ENCODE measurements at regions of chr21 and their contacts with region 1.

Region 1: DNA sequence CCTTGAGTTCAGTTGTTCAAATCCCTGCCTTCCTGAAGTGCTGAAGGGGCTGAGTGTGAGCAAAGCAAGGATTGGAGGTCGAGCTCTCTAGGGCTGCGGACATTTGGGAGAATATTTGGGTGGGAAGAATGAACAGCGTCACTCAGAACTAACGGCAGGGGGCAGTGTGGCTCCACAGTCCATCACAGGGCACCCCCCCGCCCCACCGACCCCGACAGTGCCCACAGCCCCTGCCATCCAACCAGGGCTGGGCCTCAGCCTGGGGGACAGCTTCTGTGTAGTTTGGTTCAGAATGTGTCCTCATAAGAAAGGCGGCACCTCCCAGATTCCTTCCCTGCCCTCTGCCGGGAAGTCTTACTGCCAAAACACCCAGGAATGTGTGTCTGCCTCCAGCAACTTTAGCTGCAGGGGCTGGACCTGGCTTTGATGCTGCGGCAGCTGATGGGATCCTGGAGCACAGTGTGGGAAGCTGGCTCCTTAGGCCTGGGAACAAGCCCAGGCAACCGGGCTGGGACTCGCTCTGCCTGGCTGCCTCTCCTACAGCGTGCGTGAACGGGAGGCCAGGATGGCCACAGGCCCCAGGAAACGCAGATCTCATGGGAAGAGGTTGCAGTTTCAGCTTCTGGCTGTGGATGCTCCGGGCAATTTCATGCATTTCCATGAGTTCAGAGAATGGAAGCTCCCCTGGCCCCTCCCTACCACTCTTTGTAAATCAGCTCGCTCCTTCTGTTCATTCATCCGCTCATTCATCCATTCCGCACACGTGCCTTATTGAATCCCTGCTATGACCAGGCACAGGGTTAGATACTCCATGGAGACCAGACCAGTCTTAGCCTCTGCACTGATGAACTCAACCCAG is 104.9 kb upstream of the TMPRSS2 start:
- DNase-seq: peak; percentile 79
- ATAC-seq: peak; percentile 82
- H3K4me3 Mint-ChIP-seq: peak overlapping the region; percentile 30
- H3K27ac Mint-ChIP-seq: peak overlapping the region; percentile 60
- H3K4me1 Mint-ChIP-seq: peaks cover 17% of the 10 kb centered on the region
- H3K27me3 Mint-ChIP-seq: peaks cover 6% of the 10 kb centered on the region
- CTCF ChIP-seq: peak; percentile 81

Region 2: GRCh38 chr21:41418393-41418792 is 194.5 kb before region 1 on chr21:
- CTCF ChIA-PET with region 1: no interaction called
- POLR2A ChIA-PET with region 1: no interaction called
- DNase-seq: no peak
- ATAC-seq: no peak
- H3K4me3 Mint-ChIP-seq: no peak overlapping the region
- H3K27ac Mint-ChIP-seq: no peak overlapping the region
- H3K4me1 Mint-ChIP-seq: peaks cover 26% of the 10 kb centered on the region
- H3K27me3 Mint-ChIP-seq: peaks cover 19% of the 10 kb centered on the region
- CTCF ChIP-seq: no peak

Region 3: DNA sequence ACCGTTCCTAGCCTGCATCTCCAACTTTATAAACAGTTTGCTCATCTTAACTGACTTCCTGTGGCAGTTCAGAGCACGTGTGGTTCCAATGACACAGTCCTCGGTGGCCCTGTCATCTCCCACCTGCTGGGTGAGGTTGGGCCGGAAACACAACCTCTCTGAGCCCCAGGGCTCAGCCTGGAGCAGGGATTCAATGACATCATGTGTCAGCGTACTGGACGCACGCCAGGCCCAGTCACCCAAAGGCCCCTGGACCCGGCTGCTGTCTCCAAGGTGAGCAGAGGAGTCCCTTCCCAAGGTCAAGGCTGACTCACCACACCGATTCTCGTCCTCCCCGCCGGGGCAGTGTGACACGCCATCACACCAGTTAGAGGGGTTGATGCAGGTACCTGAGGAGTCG is 124.8 kb before region 1 on chr21:
- CTCF ChIA-PET with region 1: no interaction called
- POLR2A ChIA-PET with region 1: no interaction called
- DNase-seq: no peak
- ATAC-seq: no peak
- H3K4me3 Mint-ChIP-seq: no peak overlapping the region
- H3K27ac Mint-ChIP-seq: no peak overlapping the region
- H3K4me1 Mint-ChIP-seq: peaks cover 9% of the 10 kb centered on the region; the same call in 1 of the 2 replicates
- H3K27me3 Mint-ChIP-seq: no peaks in the 10 kb centered on the region
- CTCF ChIP-seq: no peak

Region 4: GRCh38 chr21:41589131-41589530 is 23.8 kb before region 1 on chr21:
- CTCF ChIA-PET with region 1: interaction called, 15 read pairs
- POLR2A ChIA-PET with region 1: no interaction called
- DNase-seq: no peak
- ATAC-seq: peak; percentile 78
- H3K4me3 Mint-ChIP-seq: no peak overlapping the region
- H3K27ac Mint-ChIP-seq: no peak overlapping the region
- H3K4me1 Mint-ChIP-seq: peaks cover 14% of the 10 kb centered on the region
- H3K27me3 Mint-ChIP-seq: peaks cover 15% of the 10 kb centered on the region
- CTCF ChIP-seq: no peak

Region 5: GRCh38 chr21:41648591-41649031 is 35.7 kb after region 1 on chr21:
- CTCF ChIA-PET with region 1: interaction called, 21 read pairs
- POLR2A ChIA-PET with region 1: no interaction called
- DNase-seq: no peak
- ATAC-seq: no peak
- H3K4me3 Mint-ChIP-seq: no peak overlapping the region
- H3K27ac Mint-ChIP-seq: no peak overlapping the region
- H3K4me1 Mint-ChIP-seq: no peaks in the 10 kb centered on the region
- H3K27me3 Mint-ChIP-seq: no peaks in the 10 kb centered on the region; the same call in 1 of the 2 replicates
- CTCF ChIP-seq: no peak

Region 6: DNA sequence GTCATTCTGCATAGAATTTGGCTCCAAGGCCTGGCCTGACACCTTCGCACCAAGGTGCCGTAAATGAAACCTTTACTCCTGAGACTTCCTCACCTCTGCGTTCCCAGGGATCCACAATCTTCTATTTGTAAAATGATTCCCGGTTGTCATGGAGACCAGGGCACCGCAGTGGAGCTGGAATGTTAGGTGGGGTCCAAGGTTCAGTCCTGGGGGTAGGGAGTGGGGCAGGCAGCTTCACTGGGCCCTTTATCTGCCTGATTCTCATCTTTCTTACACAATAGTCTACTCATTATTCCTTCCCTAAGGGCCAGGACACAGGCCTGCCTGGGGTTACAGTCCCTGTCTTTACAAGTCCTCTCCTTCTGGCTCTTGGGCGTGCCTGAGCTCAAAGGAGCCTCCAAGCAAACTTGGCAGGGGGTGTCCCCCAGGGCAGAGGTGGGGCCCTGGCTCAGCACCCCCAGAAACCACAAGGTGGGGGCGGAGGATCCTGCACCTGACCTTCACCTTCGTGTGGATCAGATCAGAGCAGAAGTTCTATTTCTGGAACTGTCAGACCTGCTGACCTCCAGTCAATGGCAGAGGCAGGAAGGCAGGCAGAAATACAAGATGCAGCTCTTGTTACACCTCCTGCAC is 102.9 kb after region 1 on chr21:
- CTCF ChIA-PET with region 1: interaction called, 14 read pairs
- POLR2A ChIA-PET with region 1: no interaction called
- DNase-seq: no peak
- ATAC-seq: no peak
- H3K4me3 Mint-ChIP-seq: no peak overlapping the region
- H3K27ac Mint-ChIP-seq: no peak overlapping the region
- H3K4me1 Mint-ChIP-seq: peaks cover 42% of the 10 kb centered on the region
- H3K27me3 Mint-ChIP-seq: peaks cover 6% of the 10 kb centered on the region
- CTCF ChIP-seq: no peak

Region 7: DNA sequence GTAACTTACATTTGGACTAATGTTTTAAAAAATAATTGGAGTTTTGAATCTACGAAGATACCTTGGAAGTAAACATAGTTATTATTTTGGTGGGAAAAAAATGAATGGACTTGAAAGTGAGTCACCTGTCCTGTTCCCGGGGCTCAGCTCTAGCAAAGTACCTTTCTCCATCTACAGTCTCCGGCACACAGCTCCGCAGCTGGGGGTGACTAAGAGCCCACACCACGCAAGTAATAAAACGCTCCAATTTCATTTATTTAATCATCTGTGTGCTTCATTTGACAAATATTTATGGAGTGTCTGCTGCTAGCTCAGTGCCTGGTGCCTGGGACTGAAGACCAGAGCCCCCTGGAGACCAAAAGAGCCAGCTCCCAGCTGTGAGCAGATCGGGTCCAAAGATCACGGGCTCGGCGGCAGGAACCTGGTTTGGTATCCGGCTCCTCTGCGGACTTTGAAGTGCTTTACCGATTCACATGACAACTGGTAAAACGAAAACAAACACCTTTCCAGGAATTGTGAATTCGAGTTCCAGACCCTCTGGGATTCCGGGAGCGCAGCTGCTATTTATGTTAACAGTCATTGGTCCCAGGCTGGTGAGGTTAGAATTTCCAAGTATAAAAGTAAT is 155.6 kb after region 1 on chr21:
- CTCF ChIA-PET with region 1: interaction called, 207 read pairs
- POLR2A ChIA-PET with region 1: interaction called, 7 read pairs
- DNase-seq: peak; percentile 66
- ATAC-seq: peak; percentile 15
- H3K4me3 Mint-ChIP-seq: peak overlapping the region; percentile 83
- H3K27ac Mint-ChIP-seq: no peak overlapping the region; the same call in 1 of the 2 replicates
- H3K4me1 Mint-ChIP-seq: peaks cover 73% of the 10 kb centered on the region
- H3K27me3 Mint-ChIP-seq: peaks cover 89% of the 10 kb centered on the region
- CTCF ChIP-seq: no peak

Region 8: GRCh38 chr21:41809891-41810596 is 197.1 kb after region 1 on chr21:
- CTCF ChIA-PET with region 1: interaction called, 12 read pairs
- POLR2A ChIA-PET with region 1: no interaction called
- DNase-seq: no peak
- ATAC-seq: no peak
- H3K4me3 Mint-ChIP-seq: no peak overlapping the region
- H3K27ac Mint-ChIP-seq: no peak overlapping the region
- H3K4me1 Mint-ChIP-seq: no peaks in the 10 kb centered on the region
- H3K27me3 Mint-ChIP-seq: no peaks in the 10 kb centered on the region
- CTCF ChIP-seq: no peak

Region 9: DNA sequence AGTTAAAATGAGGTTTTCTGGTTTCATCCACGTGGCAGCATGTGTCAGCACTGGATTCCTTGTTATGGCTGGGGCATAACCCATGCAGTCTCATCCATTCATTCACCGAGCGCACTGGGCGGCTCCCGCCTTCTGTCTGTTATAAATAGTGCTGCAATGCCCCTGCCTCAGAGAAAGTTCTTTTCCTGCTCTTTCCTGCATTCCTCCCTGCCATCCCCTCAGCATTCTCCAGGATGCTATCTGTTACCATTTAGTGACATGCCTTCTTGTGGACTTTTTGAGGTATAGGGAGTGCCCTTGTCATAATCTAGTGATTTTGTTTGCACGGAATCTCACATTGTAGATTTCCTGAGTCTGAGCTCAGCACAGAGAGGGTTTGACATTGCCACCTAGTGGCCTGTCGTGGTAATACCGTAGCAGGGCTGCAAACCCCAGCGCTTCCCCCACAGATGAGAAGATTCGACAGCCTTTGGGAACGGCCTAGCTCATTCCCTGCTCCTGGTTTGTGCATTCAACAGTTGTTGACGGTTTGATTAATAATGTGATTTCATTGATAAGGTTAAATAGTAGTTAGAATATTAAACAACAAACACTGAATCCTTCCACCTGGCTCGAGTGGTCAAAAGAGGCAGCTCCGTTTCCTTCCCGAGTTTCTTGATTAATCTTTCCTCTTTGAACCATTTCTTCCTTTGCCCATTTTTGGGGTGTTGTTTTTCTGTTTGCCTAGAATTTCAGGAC is 504.5 kb after region 1 on chr21:
- CTCF ChIA-PET with region 1: interaction called, 27 read pairs
- POLR2A ChIA-PET with region 1: no interaction called
- DNase-seq: peak; percentile 83
- ATAC-seq: peak; percentile 85
- H3K4me3 Mint-ChIP-seq: peak overlapping the region; percentile 41; the same call in 1 of the 2 replicates
- H3K27ac Mint-ChIP-seq: no peak overlapping the region
- H3K4me1 Mint-ChIP-seq: peaks cover 25% of the 10 kb centered on the region
- H3K27me3 Mint-ChIP-seq: no peaks in the 10 kb centered on the region
- CTCF ChIP-seq: peak; percentile 94

Measured in WTC11 (cell line).